Activated CD4-positive, alpha-beta memory T cell treated with anti-CD3 and anti-CD28 coated beads for 36 hours (primary cell): ENCODE measurements at regions of chr2 and their contacts with region 1.

Region 1: GRCh38 chr2:70258532-70258874 is 566 bp downstream of the PCYOX1 start:
- DNase-seq: peak; percentile 17
- H3K4me3 Mint-ChIP-seq: peak overlapping the region; percentile 86
- H3K27ac Mint-ChIP-seq: peak overlapping the region; percentile 13
- H3K4me1 Mint-ChIP-seq: peaks cover 28% of the 10 kb centered on the region
- H3K27me3 Mint-ChIP-seq: no peaks in the 10 kb centered on the region

Region 2: GRCh38 chr2:70248181-70248847 is 10.2 kb before region 1 on chr2 and contains the start of gene TIA1:
- CTCF ChIA-PET with region 1: interaction called, 5 read pairs
- POLR2A ChIA-PET with region 1: interaction called, 21 read pairs
- intact Hi-C with region 1: loop called (anchors 1 kb)
- DNase-seq: peak; percentile 99
- H3K4me3 Mint-ChIP-seq: peak within 1 kb of the TSS; percentile 90
- H3K27ac Mint-ChIP-seq: peak within 1 kb of the TSS; percentile 96
- H3K4me1 Mint-ChIP-seq: peaks cover 28% of the 10 kb centered on the region
- H3K27me3 Mint-ChIP-seq: peaks cover 4% of the 10 kb centered on the region
- total RNA-seq, gene TIA1: 82.5 to 98.6 TPM